ENCODE measurements at regions of chr12 and their contacts with region 1.

Region 1: GRCh38 chr12:24838531-24838950 is 110.4 kb downstream of the BCAT1 start:
- DNase-seq: peak; percentile 57
- H3K4me3 Mint-ChIP-seq: peak overlapping the region; percentile 20
- H3K27ac Mint-ChIP-seq: peak overlapping the region; percentile 85
- H3K4me1 Mint-ChIP-seq: peaks cover 44% of the 10 kb centered on the region
- H3K27me3 Mint-ChIP-seq: peaks cover 5% of the 10 kb centered on the region

Region 2: GRCh38 chr12:24270965-24271364 is 567.6 kb before region 1 on chr12:
- CTCF ChIA-PET with region 1: no interaction called
- POLR2A ChIA-PET with region 1: no interaction called
- intact Hi-C with region 1: loop called (anchors 5 kb)
- DNase-seq: no peak
- H3K4me3 Mint-ChIP-seq: no peak overlapping the region
- H3K27ac Mint-ChIP-seq: no peak overlapping the region
- H3K4me1 Mint-ChIP-seq: no peaks in the 10 kb centered on the region
- H3K27me3 Mint-ChIP-seq: no peaks in the 10 kb centered on the region

Region 3: GRCh38 chr12:24441458-24441857 is 397.1 kb before region 1 on chr12:
- CTCF ChIA-PET with region 1: no interaction called
- POLR2A ChIA-PET with region 1: no interaction called
- intact Hi-C with region 1: no loop called
- DNase-seq: no peak
- H3K4me3 Mint-ChIP-seq: no peak overlapping the region
- H3K27ac Mint-ChIP-seq: no peak overlapping the region
- H3K4me1 Mint-ChIP-seq: no peaks in the 10 kb centered on the region
- H3K27me3 Mint-ChIP-seq: peaks cover 2% of the 10 kb centered on the region

Region 4: DNA sequence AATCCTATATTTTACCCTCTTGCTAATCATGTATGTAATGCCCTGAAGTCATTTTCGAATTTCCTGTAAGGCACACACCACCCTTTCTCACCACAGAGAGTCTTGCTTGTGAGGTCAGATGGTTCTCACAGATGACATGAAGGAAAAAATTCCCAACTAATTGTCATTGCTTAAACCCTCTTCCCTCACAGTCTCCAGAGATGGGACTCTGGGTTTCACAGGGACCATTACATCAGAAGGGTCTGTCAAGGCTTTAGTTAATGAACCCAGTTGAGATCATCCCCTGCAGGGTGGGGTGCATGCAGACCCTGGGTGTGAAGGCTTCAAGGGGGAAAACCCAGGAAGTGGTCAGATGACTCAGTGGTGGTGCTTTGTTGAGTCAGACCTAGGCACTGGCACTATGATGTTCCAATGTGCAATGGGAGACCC is 119.2 kb before region 1 on chr12:
- CTCF ChIA-PET with region 1: interaction called, 3 read pairs
- POLR2A ChIA-PET with region 1: interaction called, 11 read pairs
- intact Hi-C with region 1: loop called (anchors 1 kb)
- DNase-seq: peak; percentile 79
- H3K4me3 Mint-ChIP-seq: no peak overlapping the region
- H3K27ac Mint-ChIP-seq: peak overlapping the region; percentile 84
- H3K4me1 Mint-ChIP-seq: peaks cover 31% of the 10 kb centered on the region
- H3K27me3 Mint-ChIP-seq: peaks cover 7% of the 10 kb centered on the region

Region 5: DNA sequence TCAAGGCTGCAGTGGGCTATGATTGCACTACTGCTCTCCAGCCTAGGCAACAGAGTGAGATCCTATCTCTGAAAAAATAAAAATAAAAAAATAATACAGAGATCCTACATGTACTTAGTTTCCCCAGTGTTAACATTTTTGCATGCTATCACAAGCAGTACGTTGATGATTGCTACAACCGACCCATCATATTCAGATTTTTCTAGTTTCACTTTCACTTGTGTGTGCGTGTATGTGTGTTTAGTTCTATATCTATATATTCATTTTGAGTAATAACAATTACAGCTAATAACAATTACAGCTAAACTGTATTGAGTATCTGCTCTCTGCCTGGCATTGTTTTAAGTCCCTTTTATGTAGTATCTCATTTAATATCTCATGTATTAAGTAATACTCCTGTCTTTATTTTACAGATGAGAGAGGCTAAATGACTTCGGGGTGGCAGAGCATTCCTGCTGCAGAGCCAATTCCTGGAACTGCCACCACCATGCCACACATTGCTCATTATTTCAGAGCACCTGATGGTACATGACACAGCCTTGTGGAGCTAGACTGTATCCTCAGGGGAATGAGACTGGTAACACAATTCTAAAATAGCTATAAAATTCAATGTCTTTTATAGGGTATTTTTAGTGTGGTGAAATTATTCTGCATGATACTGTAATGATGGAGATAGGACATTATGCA is 42.7 kb before region 1 on chr12:
- CTCF ChIA-PET with region 1: interaction called, 4 read pairs
- POLR2A ChIA-PET with region 1: no interaction called
- intact Hi-C with region 1: loop called (anchors 1 kb)
- DNase-seq: peak; percentile 31
- H3K4me3 Mint-ChIP-seq: peak overlapping the region; percentile 66
- H3K27ac Mint-ChIP-seq: no peak overlapping the region
- H3K4me1 Mint-ChIP-seq: peaks cover 38% of the 10 kb centered on the region
- H3K27me3 Mint-ChIP-seq: no peaks in the 10 kb centered on the region

Region 6: DNA sequence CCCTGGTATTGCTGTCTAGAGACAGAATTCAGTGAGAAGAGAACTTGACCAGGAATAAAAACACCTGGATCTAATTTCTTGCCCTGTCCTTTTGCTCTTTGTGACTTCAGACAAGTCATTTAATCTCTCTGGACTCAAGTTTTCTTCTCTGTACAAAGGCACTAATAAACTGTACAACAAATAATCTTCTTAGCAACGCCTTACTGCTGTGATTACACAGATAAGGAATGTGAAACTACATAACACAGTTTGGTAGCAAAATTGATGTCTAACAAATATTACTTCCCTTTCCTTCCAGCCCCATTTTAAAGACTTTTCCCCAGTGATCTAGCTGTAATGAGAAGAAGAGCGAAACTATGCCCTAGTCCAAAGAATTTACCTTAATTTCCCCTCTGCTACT is 41.1 kb after region 1 on chr12:
- CTCF ChIA-PET with region 1: no interaction called
- POLR2A ChIA-PET with region 1: no interaction called
- intact Hi-C with region 1: no loop called
- DNase-seq: no peak
- H3K4me3 Mint-ChIP-seq: no peak overlapping the region
- H3K27ac Mint-ChIP-seq: no peak overlapping the region
- H3K4me1 Mint-ChIP-seq: no peaks in the 10 kb centered on the region
- H3K27me3 Mint-ChIP-seq: no peaks in the 10 kb centered on the region

Region 7: DNA sequence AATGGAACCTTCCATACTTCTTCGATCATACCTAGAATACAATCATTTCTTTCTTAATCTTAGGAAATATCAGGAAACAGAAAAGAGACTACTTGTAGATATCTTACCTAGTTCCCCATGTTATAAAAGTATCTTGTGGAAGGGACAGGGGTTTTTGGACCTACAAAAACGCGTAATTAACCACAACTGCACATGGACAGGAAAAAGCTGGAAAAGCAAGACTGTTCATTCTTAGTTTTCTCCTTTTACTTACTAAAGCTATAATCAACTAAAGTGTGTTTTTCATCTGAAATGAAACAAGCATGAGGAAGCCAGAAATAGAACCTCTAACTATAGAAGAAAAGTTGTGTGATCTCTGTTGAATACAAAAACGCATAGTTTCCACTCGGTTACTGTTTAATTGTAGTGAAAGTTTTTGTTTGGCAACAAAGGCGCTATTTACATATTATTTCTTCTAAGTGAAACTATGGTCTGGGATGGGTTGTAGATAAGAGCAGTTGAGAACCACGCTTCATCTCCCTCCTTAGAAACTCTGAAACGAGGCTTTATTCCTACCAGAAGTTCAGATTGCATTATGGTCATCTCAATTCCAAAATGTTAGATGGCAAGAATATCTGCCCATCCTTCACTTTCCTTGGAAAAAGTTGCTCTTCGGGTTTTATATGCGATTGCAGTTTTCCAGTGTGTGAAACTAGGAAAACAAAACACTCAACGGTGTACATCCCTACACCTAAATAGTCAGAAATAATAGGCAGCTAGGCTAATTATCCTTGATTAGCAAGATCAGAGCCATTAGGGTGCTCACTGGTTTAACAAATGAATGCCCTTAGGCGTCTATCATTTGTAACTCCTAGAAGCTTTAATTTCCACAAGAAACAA is 109.2 kb after region 1 on chr12:
- CTCF ChIA-PET with region 1: no interaction called
- POLR2A ChIA-PET with region 1: interaction called, 7 read pairs
- intact Hi-C with region 1: loop called (anchors 1 kb)
- DNase-seq: no peak
- H3K4me3 Mint-ChIP-seq: peak overlapping the region; percentile 78
- H3K27ac Mint-ChIP-seq: peak overlapping the region; percentile 53
- H3K4me1 Mint-ChIP-seq: peaks cover 34% of the 10 kb centered on the region
- H3K27me3 Mint-ChIP-seq: peaks cover 55% of the 10 kb centered on the region

Region 8: GRCh38 chr12:25328072-25328712 is 489.7 kb after region 1 on chr12:
- CTCF ChIA-PET with region 1: no interaction called
- POLR2A ChIA-PET with region 1: no interaction called
- intact Hi-C with region 1: loop called (anchors 2 kb)
- DNase-seq: no peak
- H3K4me3 Mint-ChIP-seq: no peak overlapping the region
- H3K27ac Mint-ChIP-seq: no peak overlapping the region
- H3K4me1 Mint-ChIP-seq: peaks cover 23% of the 10 kb centered on the region
- H3K27me3 Mint-ChIP-seq: peaks cover 6% of the 10 kb centered on the region